H1 (cell line): ENCODE measurements at regions of chr11 and their contacts with region 1.

Region 1: DNA sequence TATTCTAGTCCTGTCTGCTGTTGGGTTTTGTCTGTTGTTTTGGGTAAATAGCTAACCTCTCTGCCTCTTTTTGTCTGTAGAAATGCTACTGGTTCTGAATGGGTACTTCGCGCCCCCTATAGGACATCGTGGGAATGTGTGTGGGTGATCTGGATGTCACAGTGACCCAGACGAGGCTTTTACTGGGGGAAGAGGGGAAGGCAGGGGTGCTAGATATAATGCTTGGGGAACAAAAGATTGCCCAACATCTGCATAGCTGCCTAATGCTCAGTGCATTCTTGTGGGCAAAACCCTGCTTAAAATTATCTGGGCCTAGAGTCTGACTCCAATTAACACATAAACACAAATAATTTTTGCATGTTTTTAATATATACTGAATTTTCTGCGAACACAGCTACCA is 57.7 kb downstream of the BMAL1 start:
- DNase-seq: peak in 1 of 2 experiments; percentile 84
- H3K4me3 ChIP-seq: no peak overlapping the region
- H3K27ac ChIP-seq: no peak overlapping the region
- H3K4me1 ChIP-seq: peaks cover 0 to 2% (median 0%) of the 10 kb centered on the region in 4 experiments; a peak in 2 of 7 replicates
- H3K27me3 ChIP-seq: no peaks in the 10 kb centered on the region
- CTCF ChIP-seq: peak; percentile 72 to 93 (median 79)
- EP300 ChIP-seq: no peak
- POLR2A ChIP-seq: no peak
- RAD21 ChIP-seq: peak; percentile 83 to 92

Region 2: DNA sequence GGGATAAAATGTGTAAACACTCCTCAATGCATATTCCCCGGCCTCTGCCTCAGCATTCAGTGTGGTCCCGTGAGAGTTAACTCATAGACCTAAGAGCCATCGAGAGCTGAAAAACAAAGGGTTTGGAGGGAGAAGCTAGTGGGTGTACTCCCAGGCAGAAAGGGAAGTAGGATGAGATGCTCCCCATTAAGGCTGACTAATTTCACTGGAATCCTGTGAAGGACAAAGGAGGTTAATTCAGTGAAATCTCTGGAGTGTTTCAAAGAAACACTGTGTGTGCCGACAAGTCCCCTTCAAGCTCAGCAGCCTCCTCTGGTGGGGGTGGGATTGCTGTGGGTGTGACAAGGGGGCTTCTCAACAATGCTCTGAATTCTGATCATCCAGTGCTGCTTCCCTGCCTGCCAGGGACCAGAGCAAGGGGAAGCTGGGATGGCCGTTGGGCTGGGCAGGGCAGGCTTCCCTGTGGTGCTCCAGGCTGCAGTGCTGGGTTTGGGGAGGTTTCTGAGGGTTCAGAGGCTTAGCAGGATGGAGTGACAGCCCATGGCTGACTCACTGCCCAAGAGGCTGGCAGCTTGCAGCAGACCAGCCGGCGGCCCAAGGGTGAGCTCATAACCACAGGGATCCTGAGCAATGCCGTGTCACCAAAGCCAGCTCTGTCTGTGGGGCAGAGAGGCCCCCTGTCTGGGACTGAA is 119.2 kb before region 1 on chr11:
- CTCF ChIA-PET with region 1: interaction called, 98 read pairs
- POLR2A ChIA-PET with region 1: no interaction called
- DNase-seq: peak in 1 of 2 experiments; percentile 56
- H3K4me3 ChIP-seq: no peak overlapping the region
- H3K27ac ChIP-seq: no peak overlapping the region
- H3K4me1 ChIP-seq: peaks cover 0 to 6% (median 2%) of the 10 kb centered on the region in 4 experiments; a peak in 2 of 7 replicates
- H3K27me3 ChIP-seq: no peaks in the 10 kb centered on the region
- CTCF ChIP-seq: no peak
- EP300 ChIP-seq: no peak
- POLR2A ChIP-seq: no peak
- RAD21 ChIP-seq: no peak

Region 3: DNA sequence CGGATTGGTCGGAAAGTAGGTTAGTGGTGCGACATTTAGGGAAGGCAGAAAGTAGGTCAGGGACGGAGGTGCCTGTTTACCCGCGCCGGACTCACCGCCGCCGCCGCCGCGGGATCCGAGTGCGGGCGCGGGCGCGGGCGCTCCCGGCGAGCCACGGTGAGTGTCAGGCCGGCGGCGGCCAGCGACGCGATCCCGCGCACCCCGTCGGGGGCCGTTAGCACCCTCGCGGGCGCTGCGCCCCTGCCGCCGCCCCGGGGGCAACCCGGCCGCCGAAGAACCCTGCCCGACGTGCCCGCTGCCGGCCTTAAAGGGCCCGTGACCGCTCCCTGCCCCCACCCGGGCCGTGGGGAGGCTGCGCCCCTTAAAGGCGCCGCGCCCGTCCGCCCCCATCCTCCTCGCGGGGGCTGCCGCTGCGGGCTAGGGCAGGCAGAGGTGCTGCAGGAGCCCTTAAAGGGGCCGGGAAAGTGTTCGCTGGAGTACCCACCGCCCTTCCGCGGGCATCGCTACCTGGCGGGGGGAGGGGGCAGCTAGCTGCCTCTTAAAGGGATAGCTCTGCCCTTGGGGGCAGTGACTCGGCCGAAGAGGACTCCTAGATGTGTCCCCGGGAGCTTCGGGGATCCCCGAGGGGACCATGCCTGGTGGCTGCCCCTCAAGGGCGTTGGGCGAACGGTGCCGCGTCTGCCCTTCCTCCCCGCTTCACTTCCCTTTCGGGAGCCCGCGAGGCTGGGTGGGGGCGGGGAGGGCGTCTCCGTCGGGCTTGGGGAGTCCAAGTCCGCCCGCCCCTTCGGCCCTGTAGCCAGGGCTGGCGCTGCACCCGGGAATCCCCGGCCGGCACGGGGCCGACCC is 57.3 kb before region 1 on chr11 and contains the start of gene BMAL1:
- CTCF ChIA-PET with region 1: interaction called, 17 read pairs
- POLR2A ChIA-PET with region 1: interaction called, 4 read pairs
- DNase-seq: peak in 1 of 2 experiments; percentile 75
- H3K4me3 ChIP-seq: peak within 1 kb of the TSS; percentile 66 to 89 (median 80)
- H3K27ac ChIP-seq: no peak within 1 kb of the TSS
- H3K4me1 ChIP-seq: no peaks in the 10 kb centered on the region; a peak in 2 of 7 replicates
- H3K27me3 ChIP-seq: peaks cover 6 to 57% (median 42%) of the 10 kb centered on the region in 4 experiments
- CTCF ChIP-seq: no peak
- EP300 ChIP-seq: no peak
- POLR2A ChIP-seq: no peak
- RAD21 ChIP-seq: no peak
- total RNA-seq, gene BMAL1: 6.8 and 9.9 TPM in 2 replicates

Region 4: DNA sequence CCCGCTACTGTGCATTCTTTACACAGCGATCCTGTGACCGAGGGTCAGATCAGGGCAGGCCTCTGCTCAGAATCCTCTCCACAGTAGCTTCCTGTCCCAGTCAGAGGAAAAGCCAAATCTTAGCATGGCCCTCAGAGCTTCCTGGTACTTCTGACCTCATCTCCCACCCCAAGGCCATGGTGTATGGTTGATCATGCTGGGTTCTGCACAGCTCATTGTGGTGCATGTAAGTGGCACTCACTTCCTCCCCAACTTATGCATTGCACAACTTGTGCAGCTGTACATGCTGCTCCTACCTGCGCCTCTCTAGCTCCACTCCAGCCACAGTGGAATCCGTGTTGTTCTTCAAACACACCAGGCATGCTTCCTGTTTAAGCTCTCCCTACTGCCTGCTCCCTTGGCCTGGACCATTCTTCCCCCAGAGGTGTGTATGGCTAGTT is 37.4 kb before region 1 on chr11:
- CTCF ChIA-PET with region 1: interaction called, 32 read pairs
- POLR2A ChIA-PET with region 1: no interaction called
- DNase-seq: no peak
- H3K4me3 ChIP-seq: no peak overlapping the region
- H3K27ac ChIP-seq: no peak overlapping the region
- H3K4me1 ChIP-seq: no peaks in the 10 kb centered on the region
- H3K27me3 ChIP-seq: no peaks in the 10 kb centered on the region
- CTCF ChIP-seq: no peak
- EP300 ChIP-seq: no peak
- POLR2A ChIP-seq: no peak
- RAD21 ChIP-seq: no peak

Region 5: DNA sequence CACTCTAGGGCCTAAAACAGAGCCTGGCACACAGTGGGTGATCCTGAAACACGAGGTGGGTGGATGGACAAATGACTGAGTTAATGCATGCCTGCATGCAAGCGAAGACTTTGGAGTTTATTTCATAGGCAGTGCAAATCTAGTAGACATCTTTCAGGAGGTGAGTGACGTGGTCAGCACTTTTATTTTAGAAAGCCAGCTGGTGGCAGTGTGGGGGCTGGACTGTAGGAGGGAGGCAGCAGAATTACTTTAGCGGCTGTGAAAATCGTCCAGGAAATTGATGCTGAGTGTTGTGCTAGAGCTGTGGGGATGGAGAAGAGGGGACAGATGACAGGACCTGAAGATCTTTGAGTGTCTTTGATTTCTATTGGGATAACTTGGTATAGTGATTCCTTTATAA is 10.6 kb before region 1 on chr11:
- CTCF ChIA-PET with region 1: interaction called, 13 read pairs
- POLR2A ChIA-PET with region 1: interaction called, 3 read pairs
- DNase-seq: no peak
- H3K4me3 ChIP-seq: no peak overlapping the region
- H3K27ac ChIP-seq: no peak overlapping the region
- H3K4me1 ChIP-seq: peaks cover 0 to 3% (median 1%) of the 10 kb centered on the region in 4 experiments; a peak in 2 of 7 replicates
- H3K27me3 ChIP-seq: no peaks in the 10 kb centered on the region
- CTCF ChIP-seq: no peak
- EP300 ChIP-seq: no peak
- POLR2A ChIP-seq: no peak
- RAD21 ChIP-seq: no peak

Region 6: DNA sequence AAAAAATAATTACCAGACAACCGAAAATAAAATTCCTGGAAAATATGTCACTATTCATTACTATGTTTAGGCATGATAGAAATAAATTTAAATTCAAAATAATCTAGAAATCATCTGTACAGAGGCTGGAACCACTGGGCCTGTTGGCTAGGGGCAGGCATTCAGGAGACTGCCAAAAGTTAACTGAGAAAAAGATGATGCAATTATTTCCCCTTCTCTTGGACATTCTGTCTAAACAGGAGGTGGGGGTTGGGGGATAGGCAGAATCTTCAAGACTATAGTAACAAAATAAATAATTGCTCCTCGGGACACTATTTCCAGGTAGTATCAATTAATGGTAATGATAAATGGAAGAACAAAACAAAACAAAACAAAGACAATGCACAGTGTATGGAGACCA is 113.6 kb after region 1 on chr11:
- CTCF ChIA-PET with region 1: no interaction called
- POLR2A ChIA-PET with region 1: no interaction called
- DNase-seq: no peak
- H3K4me3 ChIP-seq: no peak overlapping the region
- H3K27ac ChIP-seq: no peak overlapping the region
- H3K4me1 ChIP-seq: no peaks in the 10 kb centered on the region; a peak in 2 of 7 replicates
- H3K27me3 ChIP-seq: no peaks in the 10 kb centered on the region
- CTCF ChIP-seq: no peak
- EP300 ChIP-seq: no peak
- POLR2A ChIP-seq: no peak
- RAD21 ChIP-seq: no peak